ENCODE measurements at regions of chr1 and their contacts with region 1.

Region 1: GRCh38 chr1:98794196-98794886 is 132.8 kb downstream of the SNX7 start:
- DNase-seq: peak in 1 of 2 donors; percentile 84
- ATAC-seq: peak; percentile 74 to 88 (median 82)
- H3K4me3 ChIP-seq: no peak overlapping the region
- H3K4me3 Mint-ChIP-seq: no peak overlapping the region
- H3K27ac ChIP-seq: no peak overlapping the region
- H3K27ac Mint-ChIP-seq: no peak overlapping the region
- H3K4me1 ChIP-seq: no peaks in the 10 kb centered on the region
- H3K4me1 Mint-ChIP-seq: peaks cover 0 to 5% of the 10 kb centered on the region in 2 donors
- H3K27me3 ChIP-seq: no peaks in the 10 kb centered on the region
- H3K27me3 Mint-ChIP-seq: peaks cover 0 to 5% of the 10 kb centered on the region in 2 donors
- CTCF ChIP-seq: peak; percentile 70

Region 2: DNA sequence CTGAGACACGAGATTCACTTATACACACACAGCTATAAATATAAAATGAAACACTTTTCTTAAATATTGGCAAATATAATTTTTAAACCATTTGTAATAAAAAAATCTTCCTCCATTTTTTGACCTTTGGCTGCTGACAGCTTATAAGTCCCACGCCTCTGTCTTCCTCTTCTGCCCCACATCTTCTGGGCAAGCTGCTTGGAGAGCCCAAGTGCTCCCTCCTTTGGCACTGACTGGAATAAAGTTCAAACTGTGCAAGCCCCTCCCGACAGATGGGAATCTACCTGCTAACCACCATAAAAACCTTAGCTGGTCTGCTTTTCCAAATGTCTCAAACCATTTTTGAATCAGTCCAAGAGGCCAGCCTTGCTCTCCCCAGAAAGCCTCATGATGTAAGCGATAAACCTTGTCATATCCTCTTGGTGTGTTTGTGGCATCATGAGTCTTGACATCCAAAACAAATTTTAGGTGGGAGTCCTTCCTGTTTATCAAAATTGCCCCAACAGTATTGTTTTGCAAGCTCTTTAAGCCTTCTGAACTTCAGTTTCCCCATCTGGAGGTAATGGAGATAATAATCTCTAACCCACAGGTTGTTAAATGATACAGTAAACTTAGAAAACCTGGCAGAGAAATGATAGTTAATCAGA is 33.0 kb before region 1 on chr1:
- intact Hi-C with region 1: no loop called
- DNase-seq: no peak
- ATAC-seq: no peak
- H3K4me3 ChIP-seq: no peak overlapping the region
- H3K4me3 Mint-ChIP-seq: no peak overlapping the region
- H3K27ac ChIP-seq: no peak overlapping the region
- H3K27ac Mint-ChIP-seq: no peak overlapping the region
- H3K4me1 ChIP-seq: no peaks in the 10 kb centered on the region
- H3K4me1 Mint-ChIP-seq: no peaks in the 10 kb centered on the region
- H3K27me3 ChIP-seq: no peaks in the 10 kb centered on the region
- H3K27me3 Mint-ChIP-seq: no peaks in the 10 kb centered on the region
- CTCF ChIP-seq: no peak

Region 3: GRCh38 chr1:98940722-98941079 is 146.4 kb after region 1 on chr1:
- intact Hi-C with region 1: loop called (anchors 10 kb)
- DNase-seq: no peak
- ATAC-seq: no peak
- H3K4me3 ChIP-seq: no peak overlapping the region
- H3K4me3 Mint-ChIP-seq: no peak overlapping the region
- H3K27ac ChIP-seq: no peak overlapping the region
- H3K27ac Mint-ChIP-seq: no peak overlapping the region
- H3K4me1 ChIP-seq: no peaks in the 10 kb centered on the region
- H3K4me1 Mint-ChIP-seq: no peaks in the 10 kb centered on the region
- H3K27me3 ChIP-seq: no peaks in the 10 kb centered on the region
- H3K27me3 Mint-ChIP-seq: no peaks in the 10 kb centered on the region
- CTCF ChIP-seq: no peak

Region 4: DNA sequence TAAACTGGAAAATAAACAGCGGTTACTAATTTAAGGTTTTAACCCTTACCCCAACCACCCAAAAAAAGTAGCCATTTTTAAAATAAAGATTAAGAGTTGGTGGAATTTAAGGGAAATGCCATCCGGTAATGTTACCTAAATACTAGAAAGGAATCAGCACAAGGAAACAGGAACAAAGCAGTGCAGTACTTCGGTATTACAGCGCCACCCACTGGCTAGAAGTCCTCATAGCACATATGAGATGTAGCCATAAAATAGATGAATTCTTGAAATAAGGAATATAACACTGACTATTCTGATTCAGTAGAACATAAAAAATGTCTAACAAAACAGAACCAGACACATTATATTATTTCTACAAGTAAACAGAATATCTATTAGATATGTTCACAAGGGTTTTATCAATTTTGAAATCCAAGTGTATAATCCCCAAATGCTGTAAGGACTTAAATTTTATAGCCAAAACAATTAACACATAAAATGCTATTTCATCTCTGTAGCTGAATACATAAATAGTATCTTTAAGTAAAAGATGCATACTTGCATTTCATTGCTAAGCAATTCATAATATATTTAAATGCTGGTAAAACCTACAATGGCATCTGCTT is 913.3 kb after region 1 on chr1:
- intact Hi-C with region 1: loop called (anchors 5 kb)
- DNase-seq: peak; percentile 24 to 67
- ATAC-seq: peak; percentile 49 to 66 (median 63)
- H3K4me3 ChIP-seq: no peak overlapping the region
- H3K4me3 Mint-ChIP-seq: no peak overlapping the region
- H3K27ac ChIP-seq: no peak overlapping the region
- H3K27ac Mint-ChIP-seq: no peak overlapping the region
- H3K4me1 ChIP-seq: peaks cover 6% of the 10 kb centered on the region
- H3K4me1 Mint-ChIP-seq: peaks cover 7 to 11% of the 10 kb centered on the region in 2 donors
- H3K27me3 ChIP-seq: no peaks in the 10 kb centered on the region
- H3K27me3 Mint-ChIP-seq: no peaks in the 10 kb centered on the region
- CTCF ChIP-seq: peak; percentile 76

Measured in natural killer cell (primary cell).